Upper lobe of right lung (tissue), 1 donor: ENCODE measurements at regions of chr20 and their contacts with region 1.

Region 1: DNA sequence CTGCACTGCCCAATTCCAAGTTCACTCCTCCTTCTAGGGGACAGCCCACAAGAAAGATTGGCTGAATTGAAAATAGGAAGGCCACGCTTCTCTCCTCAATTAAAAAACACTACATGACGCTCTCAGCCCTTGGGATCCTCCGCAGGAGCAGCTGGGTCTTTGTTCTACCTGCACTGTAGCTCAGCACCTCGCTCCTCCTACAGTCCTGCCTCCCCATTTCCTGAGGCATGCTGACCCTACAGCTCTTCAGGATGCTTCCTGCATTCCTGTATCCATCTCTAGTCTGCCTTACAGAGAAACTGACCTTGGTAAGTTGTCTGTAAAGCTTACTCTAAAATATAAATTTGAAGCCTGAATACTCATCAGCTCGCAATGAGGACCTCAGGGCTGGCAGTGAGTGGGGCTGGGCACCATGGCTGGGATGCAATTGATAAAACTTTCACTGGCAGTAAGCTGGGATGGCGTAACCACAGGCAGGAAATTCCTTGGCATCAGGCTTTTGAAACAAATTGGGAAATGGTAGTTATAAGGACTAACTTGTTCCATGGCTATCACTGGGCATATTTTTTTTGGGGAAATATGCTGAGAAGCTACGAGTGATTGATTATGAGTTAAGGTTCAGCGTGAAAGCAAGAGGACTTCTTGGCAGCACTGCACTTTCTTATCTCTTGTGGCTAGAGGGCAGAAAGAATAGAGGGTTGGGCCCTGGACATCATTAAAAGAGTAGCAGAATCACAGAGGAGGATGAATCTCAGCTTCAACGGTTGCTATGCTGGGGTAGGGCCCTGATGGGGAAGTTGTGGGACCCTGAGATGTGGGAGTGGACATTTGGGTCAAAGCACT is 11.7 kb upstream of the SIRPB1 start:
- DNase-seq: no peak
- ATAC-seq: no peak
- H3K4me3 ChIP-seq: no peak overlapping the region
- H3K27ac ChIP-seq: no peak overlapping the region
- H3K4me1 ChIP-seq: no peaks in the 10 kb centered on the region
- H3K27me3 ChIP-seq: no peaks in the 10 kb centered on the region
- CTCF ChIP-seq: no peak

Region 2: DNA sequence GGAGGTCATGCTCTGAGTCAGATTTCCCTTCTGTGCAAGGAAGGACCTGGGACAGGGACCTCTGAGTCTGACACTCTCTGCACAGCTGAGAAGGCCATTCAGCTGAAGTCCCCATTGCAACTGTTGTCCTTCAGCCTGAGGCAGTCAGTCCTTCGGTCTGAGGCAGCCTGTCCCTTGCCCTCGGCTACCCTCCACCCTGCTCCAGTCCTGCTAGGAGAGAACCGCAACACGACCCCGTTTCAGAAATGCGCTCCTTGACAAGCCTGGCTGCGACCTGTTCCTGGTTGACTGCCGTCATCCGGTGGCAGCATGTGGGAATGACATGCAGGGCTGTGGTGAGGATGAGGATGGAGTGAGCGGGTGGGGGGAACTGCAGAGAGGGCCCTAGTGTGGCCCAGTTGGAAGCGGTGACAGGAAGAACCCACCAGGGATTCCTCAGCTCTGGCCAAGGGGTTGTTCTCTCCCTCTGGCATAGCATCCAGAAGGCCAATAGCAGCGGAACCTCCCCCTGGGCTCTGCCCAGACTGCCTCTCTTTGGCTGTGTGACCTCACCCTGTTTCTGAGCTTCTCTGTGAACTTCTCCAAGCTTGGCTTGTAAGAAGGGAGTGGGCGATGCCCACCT is 675.1 kb before region 1 on chr20:
- intact Hi-C with region 1: no loop called
- DNase-seq: peak; percentile 81
- ATAC-seq: peak; percentile 88
- H3K4me3 ChIP-seq: no peak overlapping the region
- H3K27ac ChIP-seq: no peak overlapping the region
- H3K4me1 ChIP-seq: no peaks in the 10 kb centered on the region
- H3K27me3 ChIP-seq: peaks cover 11% of the 10 kb centered on the region
- CTCF ChIP-seq: peak; percentile 99

Region 3: GRCh38 chr20:1405801-1406200 is 225.7 kb before region 1 on chr20:
- intact Hi-C with region 1: no loop called
- DNase-seq: no peak
- ATAC-seq: no peak
- H3K4me3 ChIP-seq: no peak overlapping the region
- H3K27ac ChIP-seq: no peak overlapping the region
- H3K4me1 ChIP-seq: no peaks in the 10 kb centered on the region
- H3K27me3 ChIP-seq: no peaks in the 10 kb centered on the region
- CTCF ChIP-seq: no peak

Region 4: GRCh38 chr20:1576641-1577040 is 54.9 kb before region 1 on chr20:
- intact Hi-C with region 1: loop called (anchors 10 kb)
- DNase-seq: no peak
- ATAC-seq: no peak
- H3K4me3 ChIP-seq: no peak overlapping the region
- H3K27ac ChIP-seq: no peak overlapping the region
- H3K4me1 ChIP-seq: no peaks in the 10 kb centered on the region
- H3K27me3 ChIP-seq: no peaks in the 10 kb centered on the region
- CTCF ChIP-seq: no peak